Calu3 (cell line): ENCODE measurements at regions of chr2 and their contacts with region 1.

Region 1: DNA sequence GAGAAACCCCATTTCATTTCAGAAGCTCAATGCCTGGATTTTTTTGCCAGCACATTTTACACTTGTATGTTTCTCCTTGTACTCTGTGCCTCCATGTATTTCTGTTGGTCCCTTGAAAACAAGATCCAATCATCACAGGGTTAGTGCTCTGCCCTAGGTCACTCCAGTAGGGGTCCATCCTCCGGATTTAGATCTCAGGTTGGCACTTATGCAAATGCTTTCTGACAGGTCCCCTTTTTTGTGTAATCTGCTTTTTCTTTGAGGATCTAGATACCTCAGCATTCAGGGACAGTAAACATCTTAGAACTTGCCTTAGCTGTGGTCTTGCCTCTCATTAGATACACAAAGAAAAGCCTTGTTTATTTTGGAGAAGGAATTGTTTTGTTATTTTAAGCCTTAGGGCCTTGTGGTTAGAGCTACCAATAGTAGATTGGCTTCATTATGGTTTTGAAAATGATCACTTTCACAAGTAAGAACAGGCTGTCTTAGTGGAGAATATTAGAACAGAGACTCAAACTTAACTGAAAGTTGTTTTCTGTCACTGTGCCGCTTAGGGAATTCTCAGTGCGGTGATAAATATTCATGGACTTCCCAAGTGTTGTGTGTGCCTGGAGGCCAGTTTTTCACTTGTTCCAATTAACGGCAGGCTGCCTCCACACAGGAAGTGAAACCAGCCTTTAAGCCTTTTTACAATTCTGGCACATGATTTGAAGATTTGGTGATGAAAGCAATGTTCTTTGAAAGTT is 7.8 kb downstream of the MERTK start:
- DNase-seq: no peak
- H3K4me3 Mint-ChIP-seq: no peak overlapping the region
- H3K27ac Mint-ChIP-seq: no peak overlapping the region
- H3K4me1 Mint-ChIP-seq: peaks cover 12% of the 10 kb centered on the region
- H3K27me3 Mint-ChIP-seq: no peaks in the 10 kb centered on the region
- CTCF ChIP-seq: no peak

Region 2: DNA sequence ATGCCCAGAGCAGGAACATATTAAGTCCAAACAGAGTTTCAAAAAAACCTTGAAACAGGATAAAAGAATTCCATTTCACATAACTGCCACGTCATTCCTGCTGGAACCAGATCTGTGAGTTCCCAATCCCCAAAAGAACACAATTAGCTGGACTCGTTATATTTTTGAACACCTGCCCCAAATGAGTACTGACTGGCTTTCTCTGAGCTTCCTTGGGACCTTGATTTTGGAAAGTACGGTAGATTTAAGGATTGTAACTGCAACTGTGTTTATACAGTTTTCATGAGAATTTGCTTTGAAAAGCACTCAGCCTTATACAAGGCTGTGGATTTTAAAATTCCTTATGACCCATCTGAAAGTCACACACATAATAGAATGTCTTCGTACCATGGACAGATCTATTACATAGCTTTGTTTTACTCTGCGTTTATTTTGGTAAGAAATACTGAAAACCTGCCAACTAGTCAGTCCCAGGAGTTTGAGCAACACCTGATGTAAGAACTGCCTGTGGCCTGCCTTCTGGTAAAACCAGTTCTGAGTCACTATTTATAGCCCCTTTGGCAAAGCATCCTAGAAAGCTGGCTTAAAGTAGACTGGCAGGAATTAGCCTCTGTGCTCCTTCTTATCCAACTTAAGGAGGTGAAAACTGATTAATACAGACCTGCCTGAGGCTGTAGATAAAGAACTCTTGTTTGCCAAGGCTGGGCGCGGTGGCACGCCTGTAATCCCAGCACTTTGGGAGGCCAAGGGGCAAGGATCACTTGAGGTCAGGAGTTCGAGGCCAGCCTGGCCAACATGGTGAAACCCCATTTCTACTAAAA is 40.3 kb after region 1 on chr2:
- CTCF ChIA-PET with region 1: no interaction called
- intact Hi-C with region 1: loop called (anchors 5 kb)
- DNase-seq: peak; percentile 77
- H3K4me3 Mint-ChIP-seq: no peak overlapping the region
- H3K27ac Mint-ChIP-seq: peak overlapping the region; percentile 67
- H3K4me1 Mint-ChIP-seq: peaks cover 44% of the 10 kb centered on the region
- H3K27me3 Mint-ChIP-seq: peaks cover 17% of the 10 kb centered on the region
- CTCF ChIP-seq: no peak